Activated CD8-positive, alpha-beta T cell treated with anti-CD3 and anti-CD28 coated beads for 36 hours (primary cell): ENCODE measurements at regions of chrX and their contacts with region 1.

Region 1: GRCh38 chrX:130916636-130917422 is 13.8 kb upstream of the ENOX2 start:
- DNase-seq: peak; percentile 39
- ATAC-seq: no peak
- H3K4me3 Mint-ChIP-seq: no peak overlapping the region
- H3K27ac Mint-ChIP-seq: no peak overlapping the region
- H3K4me1 Mint-ChIP-seq: no peaks in the 10 kb centered on the region
- H3K27me3 Mint-ChIP-seq: peaks cover 2% of the 10 kb centered on the region
- CTCF ChIP-seq: peak; percentile 65

Region 2: DNA sequence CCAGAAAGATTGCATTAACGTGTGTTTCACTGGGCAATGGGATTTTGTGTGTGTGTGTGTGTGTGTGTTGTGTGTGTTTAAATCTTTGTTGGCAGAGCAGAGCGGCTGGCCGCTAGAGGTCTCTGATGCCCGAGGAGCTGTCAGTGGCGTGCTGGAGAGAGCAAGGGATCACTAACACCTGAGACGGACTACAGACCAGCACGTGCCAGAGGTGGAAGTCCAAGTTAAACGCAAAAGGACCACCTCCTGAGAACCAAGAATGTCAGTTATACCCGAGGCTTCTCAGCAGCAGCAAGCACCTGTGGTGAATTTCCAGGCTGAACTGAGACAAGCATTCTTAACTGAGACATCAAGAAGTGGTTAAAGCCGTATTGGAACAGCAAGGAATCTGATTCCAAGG is 586.1 kb before region 1 on chrX:
- CTCF ChIA-PET with region 1: no interaction called
- POLR2A ChIA-PET with region 1: no interaction called
- intact Hi-C with region 1: loop called (anchors 5 kb)
- DNase-seq: peak; percentile 55
- ATAC-seq: peak; percentile 64
- H3K4me3 Mint-ChIP-seq: no peak overlapping the region
- H3K27ac Mint-ChIP-seq: no peak overlapping the region
- H3K4me1 Mint-ChIP-seq: no peaks in the 10 kb centered on the region
- H3K27me3 Mint-ChIP-seq: peaks cover 4% of the 10 kb centered on the region
- CTCF ChIP-seq: peak; percentile 48

Region 3: GRCh38 chrX:130539721-130540321 is 377.0 kb before region 1 on chrX:
- CTCF ChIA-PET with region 1: interaction called, 14 read pairs
- POLR2A ChIA-PET with region 1: no interaction called
- intact Hi-C with region 1: loop called (anchors 2 kb)
- DNase-seq: peak; percentile 56
- ATAC-seq: no peak
- H3K4me3 Mint-ChIP-seq: no peak overlapping the region
- H3K27ac Mint-ChIP-seq: no peak overlapping the region
- H3K4me1 Mint-ChIP-seq: no peaks in the 10 kb centered on the region
- H3K27me3 Mint-ChIP-seq: peaks cover 4% of the 10 kb centered on the region
- CTCF ChIP-seq: peak; percentile 56

Region 4: GRCh38 chrX:130575831-130576389 is 340.9 kb before region 1 on chrX:
- CTCF ChIA-PET with region 1: interaction called, 24 read pairs
- POLR2A ChIA-PET with region 1: no interaction called
- intact Hi-C with region 1: no loop called
- DNase-seq: peak; percentile 43
- ATAC-seq: peak; percentile 61
- H3K4me3 Mint-ChIP-seq: no peak overlapping the region
- H3K27ac Mint-ChIP-seq: no peak overlapping the region
- H3K4me1 Mint-ChIP-seq: no peaks in the 10 kb centered on the region
- H3K27me3 Mint-ChIP-seq: peaks cover 2% of the 10 kb centered on the region
- CTCF ChIP-seq: peak; percentile 61

Region 5: DNA sequence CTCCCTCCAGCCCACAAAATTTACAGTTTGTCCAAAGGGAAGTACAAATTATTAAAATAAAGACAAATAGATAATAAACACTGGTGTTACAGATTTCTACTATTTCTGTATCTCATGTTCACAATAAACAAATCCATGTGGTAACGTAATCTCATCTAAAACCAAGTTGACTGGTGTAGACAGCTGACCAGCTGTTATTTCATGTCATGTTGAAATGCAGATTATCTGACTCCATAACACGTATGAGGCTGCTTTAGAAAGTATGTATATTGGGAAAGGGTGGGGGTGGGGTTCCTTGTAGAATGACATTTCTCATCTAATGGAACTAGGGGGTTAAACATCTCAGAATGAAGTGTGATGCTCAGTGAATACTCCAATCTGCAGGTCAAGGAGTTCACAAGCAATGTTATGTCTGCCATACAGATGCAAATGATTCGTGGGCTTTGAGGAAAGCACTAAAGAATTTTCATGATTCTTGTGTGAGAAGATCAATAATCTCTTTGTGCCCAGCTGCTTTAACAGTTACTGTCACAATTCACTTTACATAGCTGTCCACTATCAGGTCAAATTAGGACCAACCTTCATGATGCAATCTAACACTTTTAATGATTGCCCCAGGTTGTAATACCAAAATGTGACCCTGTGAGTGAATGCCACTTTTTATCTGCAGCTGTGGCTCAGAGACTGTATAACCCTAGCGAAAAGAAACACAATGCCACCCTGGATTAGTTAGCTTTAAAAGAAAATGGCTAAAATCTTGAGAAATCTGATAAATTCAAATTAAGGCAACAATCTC is 127.8 kb before region 1 on chrX:
- CTCF ChIA-PET with region 1: no interaction called
- POLR2A ChIA-PET with region 1: no interaction called
- intact Hi-C with region 1: no loop called
- DNase-seq: no peak
- ATAC-seq: no peak
- H3K4me3 Mint-ChIP-seq: no peak overlapping the region
- H3K27ac Mint-ChIP-seq: no peak overlapping the region
- H3K4me1 Mint-ChIP-seq: no peaks in the 10 kb centered on the region
- H3K27me3 Mint-ChIP-seq: no peaks in the 10 kb centered on the region
- CTCF ChIP-seq: no peak